ENCODE measurements at regions of chr11 and their contacts with region 1.

Region 1: GRCh38 chr11:75195121-75195551 is 44.2 kb downstream of the SLCO2B1 start:
- DNase-seq: no peak
- H3K4me3 ChIP-seq: no peak overlapping the region
- H3K27ac ChIP-seq: peak overlapping the region in 1 of 2 donors; percentile 5
- H3K4me1 ChIP-seq: peaks cover 0 to 8% (median 3%) of the 10 kb centered on the region in 3 donors
- H3K27me3 ChIP-seq: no peaks in the 10 kb centered on the region
- CTCF ChIP-seq: no peak

Region 2: DNA sequence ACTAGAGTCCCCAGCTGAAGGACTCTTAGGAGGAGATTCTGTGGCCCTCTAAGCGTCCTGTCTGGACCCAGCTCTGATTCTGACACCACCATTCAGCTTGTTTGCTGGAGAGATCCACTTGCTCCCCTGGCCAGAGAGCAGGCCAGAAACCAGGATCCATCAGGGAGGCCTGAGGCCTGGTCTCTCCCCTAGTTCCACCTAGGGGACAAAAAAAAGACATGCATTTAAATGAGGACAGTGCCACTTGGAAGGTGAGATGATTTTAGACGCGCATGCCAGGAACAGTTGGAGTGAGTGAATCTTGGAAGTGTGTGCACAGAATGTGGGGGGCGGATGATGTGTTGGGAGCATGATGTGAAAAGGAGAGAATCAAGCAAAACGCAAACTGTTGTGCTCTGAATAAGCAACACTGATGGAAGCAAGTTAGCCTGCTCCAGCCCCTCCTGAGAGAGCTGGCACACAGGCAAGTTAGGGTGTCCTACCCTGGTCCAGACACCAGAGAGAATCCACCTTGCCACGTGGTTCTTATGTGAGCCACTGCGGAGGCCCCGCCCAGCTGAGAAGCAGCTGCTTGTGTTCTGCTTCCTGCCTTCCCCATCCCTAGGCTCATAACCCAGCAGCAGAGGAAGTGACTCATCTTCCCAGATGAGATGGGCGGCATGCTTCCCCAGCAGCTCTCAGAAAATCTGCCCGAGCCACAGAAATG is 52.3 kb before region 1 on chr11:
- intact Hi-C with region 1: loop called (anchors 10 kb)
- DNase-seq: peak in 2 of 5 donors; percentile 65 to 92
- H3K4me3 ChIP-seq: no peak overlapping the region
- H3K27ac ChIP-seq: no peak overlapping the region
- H3K4me1 ChIP-seq: peaks cover 0 to 4% (median 0%) of the 10 kb centered on the region in 3 donors
- H3K27me3 ChIP-seq: no peaks in the 10 kb centered on the region
- CTCF ChIP-seq: no peak